CD4-positive, alpha-beta memory T cell (primary cell): ENCODE measurements at regions of chr19 and their contacts with region 1.

Region 1: DNA sequence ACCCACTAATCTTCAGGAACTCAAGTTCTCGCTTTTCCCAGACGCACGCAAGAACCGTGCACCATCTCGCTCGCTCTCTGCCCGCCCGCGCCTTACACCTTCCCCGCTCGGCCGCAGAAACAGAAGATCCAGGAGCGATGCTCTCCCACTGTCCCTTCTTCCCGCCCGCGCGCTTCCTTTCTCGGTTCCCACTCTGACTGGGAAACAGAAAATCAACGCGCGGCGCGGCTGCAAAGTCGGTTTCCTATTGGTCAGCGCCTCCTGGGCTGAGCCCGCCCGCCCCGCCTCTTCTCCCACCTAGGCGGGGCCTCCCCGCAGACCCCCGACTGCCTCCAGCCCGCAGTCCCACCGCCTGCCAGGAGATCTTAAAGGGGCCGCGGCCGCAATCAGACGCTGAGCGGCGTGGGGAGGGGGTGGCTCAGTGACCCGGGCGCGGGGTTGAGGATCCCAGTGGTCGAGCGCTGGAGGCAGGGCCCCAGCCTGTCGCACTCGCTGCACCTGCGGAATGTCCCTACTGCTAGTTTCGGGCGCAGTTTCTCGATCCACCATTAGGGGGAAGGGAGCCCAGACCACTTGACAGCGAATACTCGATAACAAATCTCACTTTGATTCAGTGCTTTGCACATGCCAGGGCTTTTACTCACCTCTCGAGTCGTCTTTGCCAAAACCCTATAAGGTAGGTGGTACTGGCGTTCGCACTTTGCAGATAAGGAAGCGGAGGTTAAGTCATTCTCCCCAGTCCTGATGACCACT is 685 bp upstream of the SLC25A23 start:
- DNase-seq: peak; percentile 97 to 98 (median 97)
- H3K4me3 ChIP-seq: peak overlapping the region; percentile 85 to 90
- H3K4me3 Mint-ChIP-seq: peak overlapping the region; percentile 93 to 99 (median 96)
- H3K27ac ChIP-seq: peak overlapping the region; percentile 70
- H3K27ac Mint-ChIP-seq: peak overlapping the region; percentile 86 to 99 (median 93)
- H3K4me1 ChIP-seq: peaks cover 24% of the 10 kb centered on the region
- H3K4me1 Mint-ChIP-seq: peaks cover 12 to 45% (median 25%) of the 10 kb centered on the region in 4 donors
- H3K27me3 ChIP-seq: no peaks in the 10 kb centered on the region
- H3K27me3 Mint-ChIP-seq: no peaks in the 10 kb centered on the region

Region 2: GRCh38 chr19:6279931-6280591 is 180.2 kb before region 1 on chr19 and contains the start of gene MLLT1:
- CTCF ChIA-PET with region 1: no interaction called
- POLR2A ChIA-PET with region 1: no interaction called
- intact Hi-C with region 1: loop called (anchors 1 kb)
- DNase-seq: peak; percentile 91 to 94 (median 93)
- H3K4me3 ChIP-seq: peak within 1 kb of the TSS; percentile 23 to 57
- H3K4me3 Mint-ChIP-seq: peak within 1 kb of the TSS; percentile 75 to 91 (median 90)
- H3K27ac ChIP-seq: peak within 1 kb of the TSS; percentile 59
- H3K27ac Mint-ChIP-seq: peak within 1 kb of the TSS; percentile 79 to 99 (median 96)
- H3K4me1 ChIP-seq: peaks cover 39% of the 10 kb centered on the region
- H3K4me1 Mint-ChIP-seq: peaks cover 29 to 45% (median 36%) of the 10 kb centered on the region in 4 donors
- H3K27me3 ChIP-seq: no peaks in the 10 kb centered on the region
- H3K27me3 Mint-ChIP-seq: peaks cover 0 to 2% of the 10 kb centered on the region in 2 donors
- total RNA-seq, gene MLLT1: 41.1 to 41.7 TPM

Region 3: DNA sequence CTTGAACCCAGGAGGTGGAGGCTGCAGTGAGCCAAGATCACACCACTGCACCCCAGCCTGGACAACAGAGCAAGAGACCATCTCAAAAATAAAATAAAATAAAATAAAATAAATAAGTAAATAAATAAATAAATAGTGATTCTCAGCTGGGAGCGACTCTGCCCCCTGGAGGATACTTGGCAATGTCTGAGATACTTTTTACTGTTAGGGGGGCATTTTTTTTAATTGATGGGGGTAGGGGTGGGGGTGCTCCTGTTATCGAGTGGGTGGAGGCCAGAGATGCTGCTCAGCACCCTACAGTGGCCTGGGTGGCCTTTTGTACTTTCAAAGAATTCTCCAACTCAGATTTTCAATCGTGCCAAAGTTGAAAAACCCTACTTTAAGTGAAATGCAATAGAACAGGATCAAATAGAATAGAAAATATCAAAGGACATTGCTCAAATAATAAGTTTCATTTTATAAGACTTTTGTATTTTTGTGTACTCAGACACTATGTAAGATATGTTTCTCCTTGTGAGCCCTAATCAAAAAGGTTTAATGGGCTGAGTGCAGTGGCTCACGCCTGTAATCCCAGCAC is 106.1 kb before region 1 on chr19:
- CTCF ChIA-PET with region 1: no interaction called
- POLR2A ChIA-PET with region 1: no interaction called
- intact Hi-C with region 1: no loop called
- DNase-seq: no peak
- H3K4me3 ChIP-seq: no peak overlapping the region
- H3K4me3 Mint-ChIP-seq: no peak overlapping the region
- H3K27ac ChIP-seq: no peak overlapping the region
- H3K27ac Mint-ChIP-seq: peak overlapping the region in 1 of 7 donors; percentile 57
- H3K4me1 ChIP-seq: no peaks in the 10 kb centered on the region
- H3K4me1 Mint-ChIP-seq: peaks cover 0 to 2% (median 0%) of the 10 kb centered on the region in 4 donors
- H3K27me3 ChIP-seq: no peaks in the 10 kb centered on the region
- H3K27me3 Mint-ChIP-seq: no peaks in the 10 kb centered on the region

Region 4: DNA sequence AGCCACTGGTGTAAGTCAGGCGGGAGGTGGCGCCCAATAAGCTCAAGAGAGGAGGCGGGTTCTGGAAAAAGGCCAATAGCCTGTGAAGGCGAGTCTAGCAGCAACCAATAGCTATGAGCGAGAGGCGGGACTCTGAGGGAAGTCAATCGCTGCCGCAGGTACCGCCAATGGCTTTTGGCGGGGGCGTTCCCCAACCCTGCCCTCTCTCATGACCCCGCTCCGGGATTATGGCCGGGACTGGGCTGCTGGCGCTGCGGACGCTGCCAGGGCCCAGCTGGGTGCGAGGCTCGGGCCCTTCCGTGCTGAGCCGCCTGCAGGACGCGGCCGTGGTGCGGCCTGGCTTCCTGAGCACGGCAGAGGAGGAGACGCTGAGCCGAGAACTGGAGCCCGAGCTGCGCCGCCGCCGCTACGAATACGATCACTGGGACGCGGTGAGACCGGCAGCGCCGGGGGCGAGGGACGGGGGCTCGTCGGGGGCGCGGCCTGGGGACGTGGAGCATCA is 87.6 kb before region 1 on chr19 and contains the start of gene ALKBH7:
- CTCF ChIA-PET with region 1: no interaction called
- POLR2A ChIA-PET with region 1: no interaction called
- intact Hi-C with region 1: loop called (anchors 2 kb)
- DNase-seq: peak; percentile 97 to 99 (median 99)
- H3K4me3 ChIP-seq: peak within 1 kb of the TSS; percentile 66 to 90
- H3K4me3 Mint-ChIP-seq: peak within 1 kb of the TSS; percentile 84 to 95 (median 92)
- H3K27ac ChIP-seq: peak within 1 kb of the TSS; percentile 92
- H3K27ac Mint-ChIP-seq: peak within 1 kb of the TSS; percentile 90 to 97 (median 95)
- H3K4me1 ChIP-seq: peaks cover 15% of the 10 kb centered on the region
- H3K4me1 Mint-ChIP-seq: peaks cover 13 to 30% (median 20%) of the 10 kb centered on the region in 4 donors
- H3K27me3 ChIP-seq: no peaks in the 10 kb centered on the region
- H3K27me3 Mint-ChIP-seq: no peaks in the 10 kb centered on the region
- total RNA-seq, gene ALKBH7: 67.4 to 73.4 TPM

Region 5: DNA sequence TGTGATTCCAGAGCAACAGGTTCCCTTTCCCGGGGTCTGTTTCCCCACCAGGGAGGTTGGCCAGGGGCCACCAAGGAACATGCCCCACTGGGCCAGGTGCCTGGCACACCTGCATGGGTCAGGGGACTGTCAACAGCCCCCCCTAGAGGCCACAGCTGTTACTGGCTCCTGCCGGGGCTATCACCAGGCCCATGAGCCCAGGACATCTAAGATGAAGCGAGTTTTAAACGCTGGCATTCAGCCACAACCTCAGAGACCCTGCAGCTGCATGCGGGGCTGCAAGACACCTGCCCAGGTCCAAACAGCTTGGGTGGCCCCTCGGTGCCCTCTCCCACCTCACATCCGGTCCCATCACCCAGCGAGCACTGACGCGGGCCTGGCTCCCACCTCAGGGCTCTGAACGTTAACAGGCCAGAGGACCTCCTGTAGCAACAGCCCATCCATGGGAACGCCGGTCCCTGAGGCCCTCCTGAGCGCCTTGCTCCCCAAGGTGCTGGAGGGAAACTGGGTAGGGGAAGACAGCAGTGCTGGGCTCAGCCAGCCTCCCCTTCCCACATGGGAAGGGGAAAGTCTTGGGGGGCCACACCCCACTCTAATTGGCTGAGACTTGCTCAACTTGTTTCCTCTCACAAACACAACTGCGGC is 47.7 kb before region 1 on chr19:
- CTCF ChIA-PET with region 1: no interaction called
- POLR2A ChIA-PET with region 1: no interaction called
- intact Hi-C with region 1: no loop called
- DNase-seq: peak; percentile 36 to 53 (median 49)
- H3K4me3 ChIP-seq: no peak overlapping the region
- H3K4me3 Mint-ChIP-seq: no peak overlapping the region
- H3K27ac ChIP-seq: no peak overlapping the region
- H3K27ac Mint-ChIP-seq: no peak overlapping the region
- H3K4me1 ChIP-seq: no peaks in the 10 kb centered on the region
- H3K4me1 Mint-ChIP-seq: no peaks in the 10 kb centered on the region
- H3K27me3 ChIP-seq: no peaks in the 10 kb centered on the region
- H3K27me3 Mint-ChIP-seq: no peaks in the 10 kb centered on the region

Region 6: DNA sequence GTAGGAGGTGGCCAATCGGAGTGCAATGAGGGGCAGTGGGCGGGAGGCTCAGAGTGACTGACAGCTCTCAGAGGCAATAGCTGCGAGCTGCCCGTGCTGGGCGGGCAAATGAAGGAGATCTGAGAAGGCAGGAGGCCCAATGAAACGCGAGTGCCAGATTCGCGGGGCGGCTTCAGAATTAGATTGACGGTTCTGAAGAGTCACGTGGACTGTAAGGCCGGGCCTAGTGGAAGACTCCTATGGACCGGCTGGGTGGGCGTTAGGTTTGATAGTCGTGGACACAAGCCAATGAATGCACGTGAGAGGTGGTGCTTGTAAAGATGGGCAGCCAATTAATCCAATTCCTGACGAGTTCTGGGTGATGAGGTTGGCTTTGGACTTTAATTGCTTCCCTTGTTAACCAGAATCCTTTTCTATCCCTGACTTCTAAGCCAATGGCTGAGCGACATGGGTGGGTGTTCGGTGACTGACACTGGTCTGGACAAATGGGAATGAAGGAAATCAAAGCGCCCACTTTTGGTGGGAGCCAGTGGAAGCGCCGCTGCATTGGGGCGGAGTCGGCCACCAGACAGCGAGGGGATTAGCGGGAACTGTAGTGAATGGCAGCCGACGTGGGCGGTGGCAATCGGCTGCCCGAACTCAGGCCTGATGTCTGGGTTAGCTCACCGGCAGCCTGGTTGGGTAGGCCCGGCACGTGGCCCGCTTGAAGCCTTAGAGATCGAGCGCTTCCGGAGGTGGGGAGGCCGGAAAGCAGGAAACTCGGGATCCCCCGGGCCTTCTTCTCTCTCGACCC is 35.1 kb before region 1 on chr19:
- CTCF ChIA-PET with region 1: no interaction called
- POLR2A ChIA-PET with region 1: interaction called, 11 read pairs
- intact Hi-C with region 1: loop called (anchors 1 kb)
- DNase-seq: peak; percentile 98 to 100 (median 100)
- H3K4me3 ChIP-seq: peak overlapping the region in 1 of 2 donors; percentile 33
- H3K4me3 Mint-ChIP-seq: peak overlapping the region; percentile 70 to 88 (median 86)
- H3K27ac ChIP-seq: peak overlapping the region; percentile 62
- H3K27ac Mint-ChIP-seq: peak overlapping the region; percentile 81 to 99 (median 94)
- H3K4me1 ChIP-seq: peaks cover 42% of the 10 kb centered on the region
- H3K4me1 Mint-ChIP-seq: peaks cover 16 to 37% (median 29%) of the 10 kb centered on the region in 4 donors
- H3K27me3 ChIP-seq: no peaks in the 10 kb centered on the region
- H3K27me3 Mint-ChIP-seq: no peaks in the 10 kb centered on the region

Region 7: DNA sequence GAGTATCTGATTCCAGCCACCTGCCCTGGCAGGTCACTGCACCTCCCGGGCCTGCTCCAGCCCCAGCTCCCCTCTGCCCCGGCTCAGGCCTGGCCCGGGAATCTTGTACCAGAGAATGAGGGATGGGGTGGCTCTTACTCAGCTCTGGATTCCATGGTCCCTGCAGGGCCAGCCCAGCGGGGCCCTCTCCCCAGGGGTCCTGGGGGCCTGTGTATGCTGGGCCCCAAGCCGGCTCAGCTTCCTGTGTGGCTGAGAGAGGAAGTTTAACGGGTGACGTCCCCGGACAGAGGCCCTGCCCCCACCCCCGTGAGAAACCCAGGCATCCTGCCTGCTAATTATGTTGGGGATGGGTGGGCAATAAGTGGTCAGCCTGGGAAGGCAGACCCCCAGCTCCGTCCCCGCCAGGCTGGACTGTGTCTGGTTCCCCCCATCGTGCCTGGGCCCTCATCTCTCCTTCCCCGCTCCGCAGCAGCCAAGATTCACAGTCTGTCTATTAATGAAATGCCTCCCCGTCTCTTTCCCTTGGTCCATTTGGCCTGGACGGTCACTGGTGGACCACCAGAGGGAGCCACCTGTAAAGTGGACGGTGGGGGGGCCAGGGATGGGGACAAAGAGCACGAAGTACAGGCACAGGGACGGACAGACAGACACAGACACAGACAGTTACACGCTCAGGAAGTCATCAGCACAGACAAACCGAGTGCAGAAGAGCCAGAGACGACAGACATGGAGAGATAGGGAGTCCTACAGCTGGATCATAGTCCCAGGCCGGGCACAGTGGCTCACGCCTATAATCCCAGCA is 21.5 kb after region 1 on chr19 and contains the start of gene DENND1C:
- CTCF ChIA-PET with region 1: interaction called, 4 read pairs
- POLR2A ChIA-PET with region 1: interaction called, 35 read pairs
- intact Hi-C with region 1: loop called (anchors 1 kb)
- DNase-seq: peak; percentile 58 to 66 (median 64)
- H3K4me3 ChIP-seq: peak within 1 kb of the TSS; percentile 91 to 97
- H3K4me3 Mint-ChIP-seq: peak within 1 kb of the TSS; percentile 94 to 100 (median 96)
- H3K27ac ChIP-seq: peak within 1 kb of the TSS; percentile 93
- H3K27ac Mint-ChIP-seq: peak within 1 kb of the TSS; percentile 93 to 99 (median 98)
- H3K4me1 ChIP-seq: peaks cover 46% of the 10 kb centered on the region
- H3K4me1 Mint-ChIP-seq: peaks cover 19 to 46% (median 27%) of the 10 kb centered on the region in 4 donors
- H3K27me3 ChIP-seq: no peaks in the 10 kb centered on the region
- H3K27me3 Mint-ChIP-seq: no peaks in the 10 kb centered on the region
- total RNA-seq, gene DENND1C: 105 to 113 TPM

Region 8: GRCh38 chr19:6501740-6502648 is 41.7 kb after region 1 on chr19 and contains the start of gene TUBB4A:
- CTCF ChIA-PET with region 1: no interaction called
- POLR2A ChIA-PET with region 1: interaction called, 5 read pairs
- intact Hi-C with region 1: loop called (anchors 1 kb)
- DNase-seq: peak in 3 of 5 donors; percentile 15 to 21 (median 17)
- H3K4me3 ChIP-seq: peak within 1 kb of the TSS in 1 of 2 donors; percentile 41
- H3K4me3 Mint-ChIP-seq: peak within 1 kb of the TSS; percentile 79 to 88 (median 84)
- H3K27ac ChIP-seq: no peak within 1 kb of the TSS
- H3K27ac Mint-ChIP-seq: peak within 1 kb of the TSS in 2 of 7 donors; percentile 42 to 81
- H3K4me1 ChIP-seq: peaks cover 18% of the 10 kb centered on the region
- H3K4me1 Mint-ChIP-seq: peaks cover 12 to 22% (median 16%) of the 10 kb centered on the region in 4 donors
- H3K27me3 ChIP-seq: peaks cover 7% of the 10 kb centered on the region
- H3K27me3 Mint-ChIP-seq: peaks cover 2 to 15% of the 10 kb centered on the region in 2 donors
- total RNA-seq, gene TUBB4A: 3.9 to 4.7 TPM